ENCODE measurements at regions of chr15 and their contacts with region 1.

Region 1: DNA sequence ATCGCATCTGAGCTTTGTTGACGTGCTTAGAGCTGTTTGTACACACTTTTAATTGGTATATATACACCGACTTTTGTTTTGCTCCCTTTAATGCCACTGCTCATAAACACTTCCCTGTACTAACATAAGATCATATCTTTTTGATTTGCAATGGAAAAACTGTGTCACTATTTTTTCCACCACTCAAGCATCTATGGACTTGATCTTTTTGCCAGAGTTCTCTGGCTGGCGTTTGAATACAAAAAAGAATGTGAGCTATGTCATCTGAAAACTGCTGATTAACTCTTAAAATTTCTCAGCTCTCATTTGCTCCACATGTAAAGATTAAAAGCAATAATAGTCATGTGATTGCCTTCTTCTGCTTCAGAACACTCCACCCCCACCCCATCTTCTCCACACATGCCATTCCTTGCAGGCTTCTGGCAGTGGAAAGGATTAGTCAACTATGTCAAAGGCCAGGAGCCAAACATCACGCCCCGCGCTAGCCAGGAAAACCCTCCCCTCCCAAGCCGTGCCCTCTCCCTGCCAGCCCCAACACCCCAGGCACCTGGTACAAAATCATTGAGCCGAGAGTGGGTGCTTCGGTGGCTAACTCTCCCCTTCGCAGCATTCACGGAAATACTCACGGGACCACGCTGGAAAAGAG is 123.4 kb upstream of the MEF2A start:
- DNase-seq: no peak
- H3K4me3 ChIP-seq: no peak overlapping the region
- H3K4me3 Mint-ChIP-seq: peak overlapping the region in 7 of 8 donors; percentile 4 to 63 (median 50)
- H3K27ac ChIP-seq: no peak overlapping the region
- H3K27ac Mint-ChIP-seq: peak overlapping the region; percentile 14 to 83 (median 71)
- H3K4me1 ChIP-seq: peaks cover 42% of the 10 kb centered on the region
- H3K4me1 Mint-ChIP-seq: peaks cover 16 to 54% (median 33%) of the 10 kb centered on the region in 4 donors
- H3K27me3 ChIP-seq: no peaks in the 10 kb centered on the region
- H3K27me3 Mint-ChIP-seq: no peaks in the 10 kb centered on the region

Region 2: GRCh38 chr15:99275525-99276128 is 166.7 kb before region 1 on chr15:
- CTCF ChIA-PET with region 1: no interaction called
- POLR2A ChIA-PET with region 1: no interaction called
- intact Hi-C with region 1: no loop called
- DNase-seq: no peak
- H3K4me3 ChIP-seq: no peak overlapping the region
- H3K4me3 Mint-ChIP-seq: no peak overlapping the region
- H3K27ac ChIP-seq: no peak overlapping the region
- H3K27ac Mint-ChIP-seq: no peak overlapping the region
- H3K4me1 ChIP-seq: no peaks in the 10 kb centered on the region
- H3K4me1 Mint-ChIP-seq: peaks cover 7 to 14% (median 13%) of the 10 kb centered on the region in 4 donors
- H3K27me3 ChIP-seq: no peaks in the 10 kb centered on the region
- H3K27me3 Mint-ChIP-seq: no peaks in the 10 kb centered on the region

Region 3: DNA sequence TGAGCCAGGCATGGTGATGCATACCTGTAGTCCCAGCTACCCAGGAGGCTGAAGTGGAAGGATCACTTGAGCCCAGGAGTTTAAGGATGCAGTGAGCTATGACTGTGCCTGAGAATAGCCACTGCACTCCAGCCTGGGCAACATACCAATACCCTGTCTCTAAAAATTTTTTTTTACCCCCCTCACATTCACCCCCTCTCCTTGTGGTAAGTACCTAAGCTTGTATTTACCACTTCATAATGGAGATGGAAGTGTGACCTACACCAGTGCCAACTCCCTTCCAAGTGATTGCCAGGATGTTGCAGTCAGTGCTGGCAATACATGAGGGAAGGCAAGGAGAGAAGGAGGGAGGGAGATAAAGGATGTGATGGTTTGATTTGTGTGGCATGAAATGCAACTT is 106.9 kb before region 1 on chr15:
- CTCF ChIA-PET with region 1: no interaction called
- POLR2A ChIA-PET with region 1: no interaction called
- intact Hi-C with region 1: no loop called
- DNase-seq: no peak
- H3K4me3 ChIP-seq: no peak overlapping the region
- H3K4me3 Mint-ChIP-seq: no peak overlapping the region
- H3K27ac ChIP-seq: no peak overlapping the region
- H3K27ac Mint-ChIP-seq: no peak overlapping the region
- H3K4me1 ChIP-seq: no peaks in the 10 kb centered on the region
- H3K4me1 Mint-ChIP-seq: peaks cover 0 to 1% (median 0%) of the 10 kb centered on the region in 4 donors
- H3K27me3 ChIP-seq: no peaks in the 10 kb centered on the region
- H3K27me3 Mint-ChIP-seq: no peaks in the 10 kb centered on the region

Region 4: GRCh38 chr15:99409097-99409473 is 33.3 kb before region 1 on chr15:
- CTCF ChIA-PET with region 1: interaction called, 12 read pairs
- POLR2A ChIA-PET with region 1: no interaction called
- intact Hi-C with region 1: no loop called
- DNase-seq: peak in 3 of 5 donors; percentile 7 to 26 (median 25)
- H3K4me3 ChIP-seq: no peak overlapping the region
- H3K4me3 Mint-ChIP-seq: no peak overlapping the region
- H3K27ac ChIP-seq: no peak overlapping the region
- H3K27ac Mint-ChIP-seq: no peak overlapping the region
- H3K4me1 ChIP-seq: peaks cover 8% of the 10 kb centered on the region
- H3K4me1 Mint-ChIP-seq: peaks cover 5 to 21% (median 6%) of the 10 kb centered on the region in 4 donors
- H3K27me3 ChIP-seq: no peaks in the 10 kb centered on the region
- H3K27me3 Mint-ChIP-seq: peaks cover 2 to 4% of the 10 kb centered on the region in 2 donors